HEK293 (cell line): ENCODE measurements at regions of chr1 and their contacts with region 1.

Region 1: DNA sequence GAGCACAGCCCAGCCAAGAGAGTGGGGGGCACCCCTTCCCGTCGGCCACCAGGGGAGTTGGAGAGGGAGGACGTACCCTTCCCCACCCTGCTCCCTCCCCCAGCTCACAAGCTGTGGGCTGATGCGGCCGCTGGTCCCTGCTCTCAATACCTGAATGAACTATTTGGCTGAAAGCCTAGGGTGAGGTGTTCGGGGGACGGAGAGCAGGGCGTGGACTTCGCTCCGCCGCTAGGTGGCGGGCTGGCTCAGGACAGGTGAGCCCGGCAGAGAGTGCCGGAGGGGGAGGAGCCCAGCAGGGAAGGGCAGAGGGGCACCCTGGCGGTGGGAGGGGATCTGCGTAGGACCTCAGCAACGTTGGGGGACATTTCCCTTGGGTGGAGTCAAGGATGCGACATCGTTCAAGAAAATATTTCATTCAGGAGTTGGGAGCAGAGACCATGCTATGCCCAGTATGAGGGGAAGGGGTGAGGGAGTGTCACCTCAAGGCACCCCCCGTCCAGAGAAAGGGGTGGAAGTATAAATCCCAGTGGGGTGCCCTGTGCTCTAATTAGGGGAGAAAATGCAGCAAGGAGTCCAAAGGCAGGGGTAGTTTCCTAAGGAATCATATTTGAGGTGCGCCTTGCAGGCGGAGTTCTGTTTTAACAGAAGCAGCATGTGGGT is 12.0 kb upstream of the RHBG start:
- H3K4me3 ChIP-seq: no peak overlapping the region; the same call in 1 of the 2 replicates
- H3K27ac ChIP-seq: no peak overlapping the region
- H3K4me1 ChIP-seq: no peaks in the 10 kb centered on the region
- CTCF ChIP-seq: peak; percentile 98

Region 2: GRCh38 chr1:156346636-156347035 is 10.4 kb before region 1 on chr1:
- CTCF ChIA-PET with region 1: interaction called, 36 read pairs
- POLR2A ChIA-PET with region 1: no interaction called
- H3K4me3 ChIP-seq: no peak overlapping the region
- H3K27ac ChIP-seq: no peak overlapping the region
- H3K4me1 ChIP-seq: no peaks in the 10 kb centered on the region
- CTCF ChIP-seq: no peak

Region 3: GRCh38 chr1:156368889-156369684 is 12.1 kb after region 1 on chr1 and contains the start of gene RHBG:
- CTCF ChIA-PET with region 1: interaction called, 34 read pairs
- POLR2A ChIA-PET with region 1: no interaction called
- H3K4me3 ChIP-seq: peak within 1 kb of the TSS; percentile 15
- H3K27ac ChIP-seq: no peak within 1 kb of the TSS
- H3K4me1 ChIP-seq: no peaks in the 10 kb centered on the region
- CTCF ChIP-seq: no peak